Endothelial cell of umbilical vein (primary cell): ENCODE measurements at regions of chr15 and their contacts with region 1.

Region 1: GRCh38 chr15:57706405-57707209 is at the start of gene POLR2M:
- DNase-seq: peak; percentile 99
- H3K4me3 ChIP-seq: peak within 1 kb of the TSS; percentile 18 to 71 (median 59)
- H3K27ac ChIP-seq: peak within 1 kb of the TSS; percentile 74
- H3K4me1 ChIP-seq: peaks cover 16% of the 10 kb centered on the region
- H3K27me3 ChIP-seq: no peaks in the 10 kb centered on the region
- CTCF ChIP-seq: no peak
- POLR2A ChIP-seq: peak; percentile 63
- total RNA-seq, gene POLR2M: 42.5 and 50.6 TPM in 2 replicates

Region 2: DNA sequence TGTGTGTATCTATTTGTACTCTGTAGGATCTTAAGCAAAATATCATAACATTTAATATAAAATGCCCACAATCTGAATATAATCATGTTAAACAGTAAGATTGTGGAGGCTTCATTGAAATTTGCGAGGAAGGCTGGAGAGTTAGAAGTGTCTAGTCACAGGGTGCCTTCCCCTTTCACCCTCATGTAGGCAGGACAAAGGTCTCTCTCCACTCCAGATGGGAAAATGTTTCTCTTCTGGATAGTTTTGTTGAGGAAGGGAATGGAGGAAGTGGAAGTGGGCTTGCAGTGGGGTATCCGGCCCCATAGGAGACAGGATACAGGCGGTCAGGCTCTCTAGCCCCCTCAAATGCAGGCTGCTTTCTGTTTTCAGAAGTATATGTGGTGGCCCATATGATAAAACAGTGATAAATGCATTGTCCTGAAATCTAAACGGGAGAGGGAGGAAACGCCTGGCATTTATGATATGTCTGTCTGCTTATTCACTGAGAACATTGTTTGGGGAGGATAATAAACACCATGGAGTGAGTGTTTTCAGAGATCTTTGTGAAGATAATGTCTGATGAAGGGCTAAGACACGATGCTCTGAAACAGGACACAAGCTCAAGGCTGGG is 128.2 kb before region 1 on chr15:
- CTCF ChIA-PET with region 1: no interaction called
- POLR2A ChIA-PET with region 1: no interaction called
- dilution Hi-C with region 1: no loop called
- intact Hi-C with region 1: loop called (anchors 5 kb)
- DNase-seq: peak; percentile 95
- H3K4me3 ChIP-seq: no peak overlapping the region
- H3K27ac ChIP-seq: peak overlapping the region; percentile 84
- H3K4me1 ChIP-seq: peaks cover 21% of the 10 kb centered on the region
- H3K27me3 ChIP-seq: no peaks in the 10 kb centered on the region
- CTCF ChIP-seq: no peak
- POLR2A ChIP-seq: peak; percentile 19

Region 3: DNA sequence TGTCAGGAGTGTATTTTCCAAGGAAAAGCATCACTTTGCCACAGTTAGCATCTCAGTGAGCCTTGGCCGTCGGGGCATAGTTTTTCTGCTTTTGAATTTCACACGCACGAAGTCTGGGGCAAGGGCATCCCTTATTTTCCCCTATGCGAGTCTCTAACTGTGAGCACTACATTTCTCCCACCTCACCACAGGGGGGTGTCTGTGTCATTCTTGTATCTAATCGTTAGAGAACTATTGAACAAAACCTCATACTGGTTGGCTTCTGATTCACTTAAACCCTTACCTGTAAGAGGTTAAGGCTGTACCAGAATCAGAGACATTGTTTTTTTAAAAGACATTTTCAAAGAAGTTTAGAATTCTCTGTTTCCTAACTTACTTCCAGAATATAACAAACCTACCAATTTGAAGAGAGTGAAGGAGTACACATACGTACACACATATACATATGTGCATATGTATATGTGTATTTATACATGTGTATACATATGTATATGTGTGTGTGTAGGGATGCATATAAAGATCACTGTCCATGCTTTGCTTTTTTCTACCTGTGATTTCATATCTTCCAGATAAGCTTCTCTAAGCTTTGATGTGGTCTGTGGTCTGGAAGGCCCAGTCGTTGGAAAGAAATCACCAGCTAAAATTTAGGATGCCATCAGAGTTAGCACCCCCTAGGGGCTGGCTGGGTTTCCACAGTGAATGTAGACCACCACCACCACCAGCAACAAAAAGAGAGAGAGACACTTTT is 65.5 kb before region 1 on chr15:
- CTCF ChIA-PET with region 1: interaction called, 9 read pairs
- POLR2A ChIA-PET with region 1: no interaction called
- dilution Hi-C with region 1: no loop called
- intact Hi-C with region 1: loop called (anchors 5 kb)
- DNase-seq: peak; percentile 41
- H3K4me3 ChIP-seq: no peak overlapping the region
- H3K27ac ChIP-seq: no peak overlapping the region
- H3K4me1 ChIP-seq: no peaks in the 10 kb centered on the region
- H3K27me3 ChIP-seq: no peaks in the 10 kb centered on the region
- CTCF ChIP-seq: peak; percentile 32 to 46
- POLR2A ChIP-seq: no peak

Region 4: GRCh38 chr15:57667171-57667849 is 39.3 kb before region 1 on chr15:
- CTCF ChIA-PET with region 1: interaction called, 12 read pairs
- POLR2A ChIA-PET with region 1: no interaction called
- dilution Hi-C with region 1: no loop called
- intact Hi-C with region 1: loop called (anchors 1 kb)
- DNase-seq: peak; percentile 67
- H3K4me3 ChIP-seq: no peak overlapping the region
- H3K27ac ChIP-seq: no peak overlapping the region
- H3K4me1 ChIP-seq: peaks cover 7% of the 10 kb centered on the region
- H3K27me3 ChIP-seq: no peaks in the 10 kb centered on the region
- CTCF ChIP-seq: peak in 1 of 2 donors; percentile 42
- POLR2A ChIP-seq: no peak

Region 5: DNA sequence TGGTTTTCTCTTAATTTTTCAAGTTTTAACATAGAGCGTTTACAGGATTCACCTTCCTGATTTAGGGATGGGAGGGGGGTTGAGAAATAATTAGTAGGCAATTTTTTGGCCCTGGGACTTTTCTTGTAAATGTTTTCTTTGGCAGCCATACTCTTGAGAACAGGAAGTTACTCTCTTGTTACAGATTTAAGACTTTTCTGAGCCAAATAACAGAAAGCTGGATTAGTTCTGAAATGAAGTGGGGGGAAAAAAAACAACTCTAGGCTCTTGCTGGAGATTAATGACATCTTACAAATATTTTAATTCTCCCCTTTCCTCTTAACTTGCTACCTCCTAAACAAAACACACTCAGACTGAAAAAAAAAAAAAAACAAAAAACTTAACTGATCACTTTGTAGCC is 13.9 kb before region 1 on chr15:
- CTCF ChIA-PET with region 1: interaction called, 12 read pairs
- POLR2A ChIA-PET with region 1: no interaction called
- dilution Hi-C with region 1: no loop called
- intact Hi-C with region 1: loop called (anchors 1 kb)
- DNase-seq: peak; percentile 86
- H3K4me3 ChIP-seq: peak overlapping the region in 1 of 3 experiments; percentile 12
- H3K27ac ChIP-seq: no peak overlapping the region
- H3K4me1 ChIP-seq: peaks cover 22% of the 10 kb centered on the region
- H3K27me3 ChIP-seq: no peaks in the 10 kb centered on the region
- CTCF ChIP-seq: no peak
- POLR2A ChIP-seq: no peak

Region 6: GRCh38 chr15:58077427-58077826 is 370.8 kb after region 1 on chr15:
- CTCF ChIA-PET with region 1: no interaction called
- POLR2A ChIA-PET with region 1: no interaction called
- dilution Hi-C with region 1: no loop called
- intact Hi-C with region 1: no loop called
- DNase-seq: peak; percentile 35
- H3K4me3 ChIP-seq: no peak overlapping the region
- H3K27ac ChIP-seq: no peak overlapping the region
- H3K4me1 ChIP-seq: no peaks in the 10 kb centered on the region
- H3K27me3 ChIP-seq: no peaks in the 10 kb centered on the region
- CTCF ChIP-seq: peak in 1 of 2 donors; percentile 33
- POLR2A ChIP-seq: no peak

Region 7: DNA sequence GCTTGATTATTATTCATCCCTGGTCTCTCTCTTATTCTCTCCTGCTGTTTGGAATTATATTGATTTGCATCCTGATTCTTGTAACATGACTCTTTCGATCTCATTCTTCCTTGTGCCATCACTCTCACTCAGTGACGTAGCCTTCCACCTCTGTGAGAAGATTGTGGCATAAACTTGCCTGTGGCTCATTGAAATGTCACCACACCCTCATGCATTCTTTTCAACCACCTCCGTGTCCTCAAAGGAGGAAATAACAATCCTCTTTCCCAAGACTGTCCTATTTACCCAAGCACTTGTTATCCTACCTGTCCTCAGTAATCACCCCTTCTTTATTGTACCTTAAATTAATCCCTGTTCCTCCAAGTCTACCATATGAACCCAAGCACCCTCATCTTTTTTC is 1863.8 kb after region 1 on chr15:
- CTCF ChIA-PET with region 1: no interaction called
- POLR2A ChIA-PET with region 1: no interaction called
- dilution Hi-C with region 1: no loop called
- intact Hi-C with region 1: no loop called
- DNase-seq: no peak
- H3K4me3 ChIP-seq: no peak overlapping the region
- H3K27ac ChIP-seq: no peak overlapping the region
- H3K4me1 ChIP-seq: no peaks in the 10 kb centered on the region
- H3K27me3 ChIP-seq: peaks cover 2 to 5% of the 10 kb centered on the region in 2 experiments
- CTCF ChIP-seq: no peak
- POLR2A ChIP-seq: no peak